ENCODE measurements at regions of chr1 and their contacts with region 1.

Region 1: GRCh38 chr1:18926315-18927081 is 24.1 kb upstream of the ALDH4A1 start:
- DNase-seq: peak; percentile 60 to 88 (median 74)
- ATAC-seq: peak; percentile 76 to 84 (median 83)
- H3K4me3 ChIP-seq: peak overlapping the region; percentile 43 to 64
- H3K4me3 Mint-ChIP-seq: peak overlapping the region; percentile 79 to 87 (median 85)
- H3K27ac ChIP-seq: peak overlapping the region; percentile 90
- H3K27ac Mint-ChIP-seq: peak overlapping the region; percentile 97 to 98
- H3K4me1 ChIP-seq: peaks cover 38 to 99% of the 10 kb centered on the region in 2 experiments
- H3K4me1 Mint-ChIP-seq: peaks cover 82 to 93% (median 92%) of the 10 kb centered on the region in 3 donors
- H3K27me3 ChIP-seq: no peaks in the 10 kb centered on the region
- H3K27me3 Mint-ChIP-seq: no peaks in the 10 kb centered on the region

Region 2: GRCh38 chr1:18902523-18903290 is 23.8 kb before region 1 on chr1 and contains the start of gene ALDH4A1:
- CTCF ChIA-PET with region 1: interaction called in 1 of 2 experiments, 21 read pairs
- POLR2A ChIA-PET with region 1: no interaction called
- DNase-seq: peak; percentile 79 to 97 (median 92)
- ATAC-seq: peak; percentile 95 to 98 (median 97)
- H3K4me3 ChIP-seq: peak within 1 kb of the TSS; percentile 75 to 77
- H3K4me3 Mint-ChIP-seq: peak within 1 kb of the TSS; percentile 88 to 91 (median 88)
- H3K27ac ChIP-seq: peak within 1 kb of the TSS; percentile 75
- H3K27ac Mint-ChIP-seq: peak within 1 kb of the TSS; percentile 96 to 99
- H3K4me1 ChIP-seq: peaks cover 16 to 33% of the 10 kb centered on the region in 2 experiments
- H3K4me1 Mint-ChIP-seq: peaks cover 30 to 47% (median 36%) of the 10 kb centered on the region in 3 donors
- H3K27me3 ChIP-seq: no peaks in the 10 kb centered on the region
- H3K27me3 Mint-ChIP-seq: no peaks in the 10 kb centered on the region
- total RNA-seq, gene ALDH4A1: 0.85 to 2.8 (median 2.2) TPM

Region 3: DNA sequence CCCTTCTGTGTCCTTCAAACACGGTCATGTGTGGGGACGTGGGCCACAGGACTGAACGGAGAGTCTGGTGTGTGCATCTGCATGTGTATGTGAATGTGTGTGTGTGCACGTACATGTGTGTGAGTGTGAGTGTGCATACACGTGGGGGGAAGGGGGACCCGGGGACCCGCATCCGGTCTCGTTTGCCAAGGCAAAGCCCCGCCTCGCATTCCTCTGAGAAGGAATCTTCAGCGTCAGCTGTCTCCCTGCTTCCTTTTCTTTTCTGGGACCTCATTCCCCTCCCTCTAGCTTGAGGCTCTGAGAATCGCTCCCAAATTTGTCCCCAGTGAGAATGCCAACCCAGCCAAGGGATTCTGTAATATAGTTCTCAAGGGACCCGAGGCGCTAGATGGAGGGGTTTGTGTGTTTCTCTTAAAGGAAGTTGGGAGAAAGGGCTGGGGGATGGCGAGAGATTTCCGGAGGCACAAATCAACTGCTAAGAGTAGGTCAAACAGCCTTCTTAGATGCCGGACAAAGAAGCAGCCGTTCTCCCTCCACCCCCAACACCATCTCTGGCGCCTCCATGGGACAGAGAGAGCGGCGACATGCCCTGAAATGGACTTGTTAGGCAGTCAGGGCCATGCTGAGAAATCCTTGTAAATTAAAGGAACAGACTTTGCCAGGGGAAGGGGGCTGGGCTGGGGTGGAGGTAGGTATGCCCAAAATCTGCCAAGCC is 23.3 kb after region 1 on chr1:
- CTCF ChIA-PET with region 1: interaction called in 1 of 2 experiments, 8 read pairs
- POLR2A ChIA-PET with region 1: interaction called, 7 to 13 read pairs
- DNase-seq: peak in 1 of 35 experiments; percentile 36
- ATAC-seq: no peak
- H3K4me3 ChIP-seq: peak overlapping the region; percentile 48 to 55
- H3K4me3 Mint-ChIP-seq: peak overlapping the region; percentile 88 to 90 (median 89)
- H3K27ac ChIP-seq: peak overlapping the region; percentile 100
- H3K27ac Mint-ChIP-seq: peak overlapping the region; percentile 99
- H3K4me1 ChIP-seq: peaks cover 71 to 100% of the 10 kb centered on the region in 2 experiments
- H3K4me1 Mint-ChIP-seq: peaks cover 96 to 98% (median 97%) of the 10 kb centered on the region in 3 donors
- H3K27me3 ChIP-seq: no peaks in the 10 kb centered on the region
- H3K27me3 Mint-ChIP-seq: no peaks in the 10 kb centered on the region

Region 4: GRCh38 chr1:18999359-18999758 is 72.9 kb after region 1 on chr1:
- CTCF ChIA-PET with region 1: no interaction called
- POLR2A ChIA-PET with region 1: no interaction called
- DNase-seq: no peak
- ATAC-seq: no peak
- H3K4me3 ChIP-seq: no peak overlapping the region
- H3K4me3 Mint-ChIP-seq: no peak overlapping the region
- H3K27ac ChIP-seq: no peak overlapping the region
- H3K27ac Mint-ChIP-seq: no peak overlapping the region
- H3K4me1 ChIP-seq: peaks cover 0 to 7% of the 10 kb centered on the region in 2 experiments
- H3K4me1 Mint-ChIP-seq: peaks cover 3 to 8% (median 5%) of the 10 kb centered on the region in 3 donors
- H3K27me3 ChIP-seq: peaks cover 0 to 22% of the 10 kb centered on the region in 2 experiments
- H3K27me3 Mint-ChIP-seq: peaks cover 0 to 5% of the 10 kb centered on the region in 2 donors